Caco-2 (cell line): ENCODE measurements at regions of chr15 and their contacts with region 1.

Region 1: GRCh38 chr15:67914537-67915460 is 75.0 kb upstream of the RNU6-1 start:
- DNase-seq: peak; percentile 74
- H3K4me3 ChIP-seq: peak overlapping the region; percentile 14
- H3K4me3 Mint-ChIP-seq: peak overlapping the region; percentile 64
- H3K27ac Mint-ChIP-seq: peak overlapping the region; percentile 72
- H3K4me1 ChIP-seq: peaks cover 55% of the 10 kb centered on the region
- H3K4me1 Mint-ChIP-seq: peaks cover 37% of the 10 kb centered on the region
- H3K27me3 ChIP-seq: no peaks in the 10 kb centered on the region
- H3K27me3 Mint-ChIP-seq: no peaks in the 10 kb centered on the region
- CTCF ChIP-seq: no peak

Region 2: GRCh38 chr15:67812241-67812644 is 102.6 kb before region 1 on chr15:
- CTCF ChIA-PET with region 1: no interaction called
- POLR2A ChIA-PET with region 1: no interaction called
- intact Hi-C with region 1: no loop called
- DNase-seq: peak in 1 of 2 experiments; percentile 25
- H3K4me3 ChIP-seq: no peak overlapping the region
- H3K4me3 Mint-ChIP-seq: no peak overlapping the region
- H3K27ac Mint-ChIP-seq: no peak overlapping the region
- H3K4me1 ChIP-seq: no peaks in the 10 kb centered on the region
- H3K4me1 Mint-ChIP-seq: no peaks in the 10 kb centered on the region
- H3K27me3 ChIP-seq: no peaks in the 10 kb centered on the region
- H3K27me3 Mint-ChIP-seq: peaks cover 8% of the 10 kb centered on the region
- CTCF ChIP-seq: no peak

Region 3: GRCh38 chr15:67863442-67863987 is 51.3 kb before region 1 on chr15:
- CTCF ChIA-PET with region 1: interaction called, 4 read pairs
- POLR2A ChIA-PET with region 1: no interaction called
- intact Hi-C with region 1: loop called (anchors 2 kb)
- DNase-seq: peak; percentile 82 to 86
- H3K4me3 ChIP-seq: peak overlapping the region; percentile 45
- H3K4me3 Mint-ChIP-seq: peak overlapping the region; percentile 70
- H3K27ac Mint-ChIP-seq: peak overlapping the region; percentile 80
- H3K4me1 ChIP-seq: peaks cover 9% of the 10 kb centered on the region; the same call in 1 of the 2 replicates
- H3K4me1 Mint-ChIP-seq: peaks cover 15% of the 10 kb centered on the region
- H3K27me3 ChIP-seq: no peaks in the 10 kb centered on the region
- H3K27me3 Mint-ChIP-seq: no peaks in the 10 kb centered on the region
- CTCF ChIP-seq: peak; percentile 89 to 91

Region 4: DNA sequence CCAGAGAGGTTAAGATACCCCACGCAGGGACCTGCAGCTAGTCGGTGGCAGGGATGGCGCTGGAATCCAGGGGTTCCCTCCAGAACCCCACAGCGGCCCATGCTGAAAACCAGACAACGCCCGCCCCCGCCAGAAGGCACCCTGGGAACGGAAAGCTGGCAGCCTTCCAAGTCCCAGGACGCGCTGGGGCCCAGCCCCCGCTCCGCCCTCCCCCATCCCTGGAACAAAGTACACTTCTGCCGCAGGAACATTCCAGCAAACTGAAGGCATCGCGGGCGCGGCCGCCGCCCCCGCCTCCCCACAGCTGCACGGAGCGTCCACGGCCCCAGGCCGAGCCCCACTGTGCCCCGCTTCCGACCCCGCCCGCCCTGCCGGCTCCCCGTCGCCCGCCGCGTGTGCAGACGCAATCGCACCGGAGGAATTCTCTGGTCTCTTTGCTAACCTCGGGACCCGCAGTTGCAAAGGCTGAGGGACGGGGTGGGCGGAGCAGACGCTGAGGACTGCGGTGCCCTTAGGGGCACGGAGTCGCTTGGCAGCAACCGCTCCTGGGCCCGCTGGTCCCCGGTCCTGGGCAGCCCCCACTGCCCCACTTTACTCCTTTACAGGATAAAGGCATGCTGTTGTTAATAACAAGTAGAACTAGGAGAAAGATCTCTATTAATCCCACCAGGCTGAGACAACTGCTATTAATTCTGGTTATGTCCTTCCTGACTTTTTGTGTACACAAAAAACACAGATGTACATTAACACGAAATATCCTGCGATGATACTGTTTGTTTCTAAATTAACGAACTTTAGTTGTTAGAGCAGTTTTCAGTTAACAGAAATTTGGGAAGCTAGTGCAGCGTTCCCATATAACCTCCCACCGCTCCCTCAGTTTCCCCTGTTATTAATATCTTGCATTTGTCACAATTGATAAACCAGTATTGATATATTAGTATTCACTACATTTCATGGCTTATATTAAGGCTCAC is 30.0 kb before region 1 on chr15:
- CTCF ChIA-PET with region 1: interaction called, 7 read pairs
- POLR2A ChIA-PET with region 1: interaction called, 4 read pairs
- intact Hi-C with region 1: loop called (anchors 1 kb)
- DNase-seq: peak; percentile 93 to 95
- H3K4me3 ChIP-seq: peak overlapping the region; percentile 32
- H3K4me3 Mint-ChIP-seq: peak overlapping the region; percentile 60
- H3K27ac Mint-ChIP-seq: peak overlapping the region; percentile 36
- H3K4me1 ChIP-seq: peaks cover 33% of the 10 kb centered on the region
- H3K4me1 Mint-ChIP-seq: peaks cover 35% of the 10 kb centered on the region
- H3K27me3 ChIP-seq: no peaks in the 10 kb centered on the region
- H3K27me3 Mint-ChIP-seq: no peaks in the 10 kb centered on the region
- CTCF ChIP-seq: peak in 1 of 2 experiments; percentile 12

Region 5: DNA sequence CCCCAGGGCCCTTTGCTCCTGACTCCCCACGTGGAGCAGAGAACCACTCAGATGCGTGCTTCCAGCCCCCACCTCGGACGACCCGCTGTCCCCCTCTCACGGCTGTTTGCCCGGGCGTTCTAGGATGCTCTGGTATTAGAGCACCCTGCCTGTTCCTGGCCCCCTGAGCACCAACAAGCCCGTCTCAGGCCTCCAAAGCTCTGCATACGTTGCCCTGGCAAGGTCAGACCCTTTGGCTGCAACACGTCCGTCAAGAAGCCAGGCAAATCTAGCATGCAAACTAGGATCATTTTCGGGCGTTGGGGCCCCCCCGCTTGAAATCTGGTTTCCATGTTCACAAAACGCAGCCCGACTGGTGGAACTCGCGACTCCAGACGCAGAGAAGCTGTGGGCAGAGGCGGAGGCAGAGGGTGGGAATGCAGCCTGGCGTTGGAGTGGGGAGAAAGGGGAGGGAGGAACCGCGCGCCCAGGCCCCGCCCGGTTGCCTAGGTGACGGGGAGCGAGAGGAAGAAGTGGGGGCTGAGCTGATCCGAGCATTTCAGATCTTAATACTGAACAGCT is 53.2 kb after region 1 on chr15:
- CTCF ChIA-PET with region 1: interaction called, 4 read pairs
- POLR2A ChIA-PET with region 1: interaction called, 10 read pairs
- intact Hi-C with region 1: no loop called
- DNase-seq: peak; percentile 75 to 82
- H3K4me3 ChIP-seq: peak overlapping the region; percentile 39
- H3K4me3 Mint-ChIP-seq: peak overlapping the region; percentile 75
- H3K27ac Mint-ChIP-seq: peak overlapping the region; percentile 85
- H3K4me1 ChIP-seq: peaks cover 21% of the 10 kb centered on the region
- H3K4me1 Mint-ChIP-seq: peaks cover 20% of the 10 kb centered on the region
- H3K27me3 ChIP-seq: no peaks in the 10 kb centered on the region
- H3K27me3 Mint-ChIP-seq: no peaks in the 10 kb centered on the region
- CTCF ChIP-seq: no peak

Region 6: DNA sequence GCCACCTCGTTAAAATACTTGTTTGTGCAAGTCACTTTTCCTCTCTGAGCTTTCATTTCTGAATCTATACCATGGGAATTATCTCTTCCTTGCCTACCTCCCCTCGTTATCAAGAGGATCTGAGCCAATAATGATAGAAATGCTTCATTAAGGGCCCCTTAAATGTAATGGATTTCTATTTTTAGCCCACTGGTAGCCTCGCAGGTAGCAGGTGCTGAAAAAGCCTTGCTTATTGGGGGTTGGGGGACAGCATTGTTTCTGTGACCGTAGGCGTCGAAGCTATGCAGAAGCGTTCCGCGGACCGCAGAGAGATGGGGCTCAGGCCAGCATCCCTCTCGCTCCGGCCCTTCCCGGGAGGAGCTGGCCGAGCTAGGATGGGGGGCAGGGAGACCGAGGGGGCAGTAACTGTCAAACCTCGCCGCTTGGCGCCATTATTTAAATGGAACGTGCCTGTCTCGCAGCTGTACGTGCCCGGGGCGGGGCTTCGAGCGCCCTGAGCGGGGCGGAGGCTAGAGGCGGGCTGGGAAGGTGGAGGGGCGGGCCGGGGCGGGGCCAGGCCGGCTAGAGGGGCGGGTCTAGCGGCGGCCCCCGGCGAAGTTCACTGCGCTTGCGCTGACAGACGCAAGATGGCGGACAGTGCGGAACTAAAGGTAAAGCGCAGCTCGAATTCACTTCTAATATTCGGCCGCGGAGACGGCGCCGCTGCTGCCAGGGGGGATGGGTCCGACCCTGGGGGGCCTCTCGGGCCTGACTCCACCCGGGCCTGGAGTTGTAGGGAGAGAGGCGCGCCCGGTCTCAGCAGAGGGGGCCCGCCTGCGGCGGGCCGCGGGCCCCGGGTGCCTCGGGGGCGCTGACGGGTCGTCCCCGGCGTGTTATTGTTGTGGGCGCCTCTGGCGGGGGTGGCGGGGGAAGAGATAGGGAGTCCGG is 139.2 kb after region 1 on chr15 and contains the start of gene PIAS1:
- CTCF ChIA-PET with region 1: interaction called, 4 read pairs
- POLR2A ChIA-PET with region 1: interaction called, 8 read pairs
- intact Hi-C with region 1: loop called (anchors 1 kb)
- DNase-seq: peak; percentile 97
- H3K4me3 ChIP-seq: peak within 1 kb of the TSS; percentile 89
- H3K4me3 Mint-ChIP-seq: peak within 1 kb of the TSS; percentile 84
- H3K27ac Mint-ChIP-seq: peak within 1 kb of the TSS; percentile 60
- H3K4me1 ChIP-seq: peaks cover 39% of the 10 kb centered on the region
- H3K4me1 Mint-ChIP-seq: peaks cover 31% of the 10 kb centered on the region
- H3K27me3 ChIP-seq: no peaks in the 10 kb centered on the region
- H3K27me3 Mint-ChIP-seq: no peaks in the 10 kb centered on the region
- CTCF ChIP-seq: peak in 1 of 2 experiments; percentile 12
- total RNA-seq, gene PIAS1: 43.1 and 48.0 TPM in 2 replicates

Region 7: GRCh38 chr15:68075764-68076385 is 161.1 kb after region 1 on chr15:
- CTCF ChIA-PET with region 1: no interaction called
- POLR2A ChIA-PET with region 1: no interaction called
- intact Hi-C with region 1: no loop called
- DNase-seq: no peak
- H3K4me3 ChIP-seq: no peak overlapping the region
- H3K4me3 Mint-ChIP-seq: no peak overlapping the region
- H3K27ac Mint-ChIP-seq: no peak overlapping the region
- H3K4me1 ChIP-seq: peaks cover 9% of the 10 kb centered on the region
- H3K4me1 Mint-ChIP-seq: peaks cover 18% of the 10 kb centered on the region
- H3K27me3 ChIP-seq: no peaks in the 10 kb centered on the region
- H3K27me3 Mint-ChIP-seq: no peaks in the 10 kb centered on the region
- CTCF ChIP-seq: no peak

Region 8: DNA sequence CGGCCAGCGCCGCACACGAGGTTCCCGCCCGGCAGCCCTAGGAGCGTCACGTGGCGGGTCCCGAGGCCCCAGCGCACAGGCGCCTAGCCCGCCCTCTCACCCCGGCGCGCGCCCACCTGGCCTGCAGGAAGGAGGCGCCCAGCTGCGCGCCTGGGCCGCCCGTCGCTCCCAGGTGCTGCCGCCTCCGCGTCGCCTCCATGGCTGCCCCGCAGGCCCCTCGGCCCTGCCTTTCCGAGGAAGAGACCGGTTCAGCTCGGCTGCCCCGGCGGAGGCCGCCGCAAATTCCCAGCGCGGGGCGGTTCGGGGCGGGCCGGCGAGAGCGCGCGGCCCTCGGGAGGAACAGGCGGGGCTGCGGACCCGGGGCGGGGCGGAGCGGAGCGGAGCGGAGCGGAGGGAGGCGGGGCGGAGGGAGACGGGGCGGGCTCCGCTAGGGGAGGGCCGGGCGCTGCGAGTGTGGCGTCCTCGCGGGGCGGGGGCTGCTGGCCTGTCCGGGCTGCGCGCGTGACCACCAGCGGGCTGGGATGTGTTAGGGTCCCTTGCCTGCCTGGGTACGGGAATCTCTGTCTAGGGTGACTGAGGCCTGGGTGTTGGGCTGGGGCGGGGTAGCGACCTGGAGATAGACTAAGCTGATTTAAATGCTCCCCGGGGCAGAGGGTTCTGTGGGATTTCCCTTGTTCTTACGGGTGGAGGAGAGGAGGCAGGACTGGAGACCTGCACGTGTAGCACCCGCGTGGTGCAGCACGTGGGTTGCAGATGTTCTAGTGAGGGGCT is 314.8 kb after region 1 on chr15 and contains the start of gene CLN6:
- CTCF ChIA-PET with region 1: no interaction called
- POLR2A ChIA-PET with region 1: interaction called, 14 read pairs
- intact Hi-C with region 1: no loop called
- DNase-seq: peak; percentile 77 to 86
- H3K4me3 ChIP-seq: peak within 1 kb of the TSS; percentile 85
- H3K4me3 Mint-ChIP-seq: peak within 1 kb of the TSS; percentile 88
- H3K27ac Mint-ChIP-seq: peak within 1 kb of the TSS; percentile 82
- H3K4me1 ChIP-seq: peaks cover 36% of the 10 kb centered on the region
- H3K4me1 Mint-ChIP-seq: peaks cover 41% of the 10 kb centered on the region
- H3K27me3 ChIP-seq: no peaks in the 10 kb centered on the region
- H3K27me3 Mint-ChIP-seq: no peaks in the 10 kb centered on the region
- CTCF ChIP-seq: no peak
- total RNA-seq, gene CLN6: 69.5 and 76.7 TPM in 2 replicates